Aorta (tissue), 5 donors: ENCODE measurements at regions of chr15 and their contacts with region 1.

Region 1: DNA sequence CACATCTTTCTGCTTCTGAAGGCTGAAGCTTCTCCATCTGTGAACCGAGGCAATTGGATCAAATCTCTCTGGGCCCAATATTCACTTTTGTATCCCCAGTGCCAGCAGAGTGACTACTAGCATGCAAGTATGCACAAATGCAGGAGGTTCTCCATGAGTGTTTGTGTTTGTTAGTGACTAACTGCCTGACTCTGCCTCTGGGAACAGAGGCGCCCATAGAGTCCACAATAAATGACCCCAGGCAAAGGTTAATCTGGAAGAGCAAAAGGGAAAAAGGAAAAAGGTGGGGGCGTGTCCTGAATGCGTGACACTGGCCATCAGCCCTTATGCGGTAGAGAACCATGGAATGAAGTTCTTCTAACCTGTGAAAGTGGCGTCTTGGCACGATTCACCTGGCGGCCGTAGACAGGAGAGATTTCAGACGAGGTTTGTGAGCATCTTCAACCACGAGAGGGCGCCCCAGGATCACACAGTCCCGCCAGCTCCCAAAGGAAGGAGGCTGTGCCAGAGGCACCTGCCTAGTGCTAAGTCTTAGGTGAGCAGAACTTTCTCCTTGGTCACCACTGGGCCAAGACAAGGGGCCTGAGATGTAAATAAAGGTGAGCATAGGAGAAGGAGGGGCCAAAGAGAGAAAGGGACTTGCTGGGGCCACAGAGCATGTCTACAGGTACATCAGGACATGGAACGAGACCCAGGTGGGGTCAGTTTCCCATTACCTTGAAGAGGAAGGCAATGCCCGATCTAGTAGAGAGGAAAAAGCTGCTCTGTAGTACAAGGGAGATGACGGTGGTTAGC is 44.2 kb downstream of the RBPMS2 start:
- DNase-seq: peak; percentile 88 to 95
- ATAC-seq: peak; percentile 82
- H3K4me3 ChIP-seq: no peak overlapping the region
- H3K27ac ChIP-seq: no peak overlapping the region
- H3K4me1 ChIP-seq: no peaks in the 10 kb centered on the region
- H3K27me3 ChIP-seq: no peaks in the 10 kb centered on the region

Region 2: GRCh38 chr15:64430000-64430735 is 301.0 kb before region 1 on chr15:
- intact Hi-C with region 1: loop called in 1 of 2 experiments (anchors 5 kb)
- DNase-seq: no peak
- ATAC-seq: no peak
- H3K4me3 ChIP-seq: no peak overlapping the region
- H3K27ac ChIP-seq: no peak overlapping the region
- H3K4me1 ChIP-seq: no peaks in the 10 kb centered on the region
- H3K27me3 ChIP-seq: no peaks in the 10 kb centered on the region

Region 3: DNA sequence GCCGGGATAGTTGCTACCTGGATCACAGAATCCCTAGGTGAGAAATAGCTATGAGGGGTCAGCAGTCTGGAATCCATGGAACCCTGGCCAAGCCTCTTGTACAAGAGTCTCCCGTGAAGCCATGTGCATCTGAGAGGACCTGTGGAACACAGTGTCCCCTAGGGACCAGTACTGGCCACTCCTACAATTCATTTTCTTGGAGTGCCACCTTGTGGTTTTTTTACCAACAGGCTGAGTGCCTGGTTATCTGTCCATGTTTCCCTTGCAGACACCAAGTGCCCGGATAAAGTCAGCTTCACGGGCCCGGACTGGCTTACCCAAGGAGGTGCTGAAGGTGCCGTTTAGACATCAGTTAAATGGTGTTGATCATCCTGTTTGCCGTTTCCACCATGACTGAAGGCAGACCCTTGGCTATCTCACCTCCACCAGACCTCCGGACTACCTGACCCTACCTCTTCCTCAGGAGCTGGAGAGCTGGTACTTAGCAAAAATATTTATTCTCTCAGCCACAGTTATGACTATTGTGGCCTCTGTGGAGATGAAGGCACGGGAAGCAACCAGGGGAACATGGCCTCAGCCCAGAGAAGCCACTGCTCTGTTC is 49.7 kb before region 1 on chr15:
- intact Hi-C with region 1: loop called (anchors 1 to 2 kb)
- DNase-seq: no peak
- ATAC-seq: peak; percentile 56
- H3K4me3 ChIP-seq: no peak overlapping the region
- H3K27ac ChIP-seq: no peak overlapping the region
- H3K4me1 ChIP-seq: no peaks in the 10 kb centered on the region
- H3K27me3 ChIP-seq: no peaks in the 10 kb centered on the region

Region 4: GRCh38 chr15:64809649-64810496 is 78.7 kb after region 1 on chr15:
- intact Hi-C with region 1: loop called (anchors 1 to 2 kb)
- DNase-seq: peak; percentile 85 to 94
- ATAC-seq: peak; percentile 86
- H3K4me3 ChIP-seq: no peak overlapping the region
- H3K27ac ChIP-seq: no peak overlapping the region
- H3K4me1 ChIP-seq: no peaks in the 10 kb centered on the region
- H3K27me3 ChIP-seq: no peaks in the 10 kb centered on the region

Region 5: GRCh38 chr15:64905119-64905831 is 174.1 kb after region 1 on chr15:
- intact Hi-C with region 1: loop called (anchors 2 to 10 kb)
- DNase-seq: peak; percentile 87 to 93
- ATAC-seq: peak; percentile 91
- H3K4me3 ChIP-seq: no peak overlapping the region
- H3K27ac ChIP-seq: no peak overlapping the region
- H3K4me1 ChIP-seq: no peaks in the 10 kb centered on the region
- H3K27me3 ChIP-seq: no peaks in the 10 kb centered on the region

Region 6: GRCh38 chr15:64911311-64912191 is 180.3 kb after region 1 on chr15 and contains the start of gene ANKDD1A:
- intact Hi-C with region 1: loop called (anchors 2 to 10 kb)
- DNase-seq: peak; percentile 84 to 92
- ATAC-seq: peak; percentile 94
- H3K4me3 ChIP-seq: peak within 1 kb of the TSS; percentile 53 to 55
- H3K27ac ChIP-seq: no peak within 1 kb of the TSS
- H3K4me1 ChIP-seq: no peaks in the 10 kb centered on the region
- H3K27me3 ChIP-seq: no peaks in the 10 kb centered on the region
- total RNA-seq, gene ANKDD1A: 22.3 to 29.2 TPM

Region 7: DNA sequence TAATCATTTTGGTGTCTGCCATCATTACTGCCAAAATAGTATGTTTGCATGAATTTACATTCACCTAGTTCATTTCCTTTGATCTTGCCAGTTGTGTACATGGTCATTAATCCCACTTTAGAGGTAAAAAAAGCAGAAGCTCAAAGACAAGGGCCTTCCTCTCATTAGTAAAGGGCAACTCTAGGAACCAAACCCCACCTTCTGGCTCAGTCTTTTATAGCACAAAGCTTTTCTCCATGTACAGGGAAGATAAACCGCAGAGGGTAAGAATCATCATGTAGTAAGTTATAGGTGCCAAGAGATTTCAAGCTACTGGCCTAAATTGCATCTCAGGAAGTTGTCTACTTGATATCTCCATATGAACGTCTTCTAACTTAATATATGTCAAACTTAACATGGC is 277.8 kb after region 1 on chr15:
- intact Hi-C with region 1: no loop called
- DNase-seq: no peak
- ATAC-seq: no peak
- H3K4me3 ChIP-seq: no peak overlapping the region
- H3K27ac ChIP-seq: no peak overlapping the region
- H3K4me1 ChIP-seq: no peaks in the 10 kb centered on the region
- H3K27me3 ChIP-seq: no peaks in the 10 kb centered on the region